B cell (primary cell): ENCODE measurements at regions of chr3 and their contacts with region 1.

Region 1: GRCh38 chr3:81490541-81491288 is 270.7 kb downstream of the GBE1 start:
- DNase-seq: peak; percentile 70
- ATAC-seq: peak; percentile 62
- H3K4me3 ChIP-seq: no peak overlapping the region
- H3K4me3 Mint-ChIP-seq: no peak overlapping the region
- H3K27ac ChIP-seq: no peak overlapping the region
- H3K27ac Mint-ChIP-seq: no peak overlapping the region
- H3K4me1 ChIP-seq: peaks cover 2% of the 10 kb centered on the region in 2 donors
- H3K4me1 Mint-ChIP-seq: peaks cover 3% of the 10 kb centered on the region
- H3K27me3 ChIP-seq: no peaks in the 10 kb centered on the region
- H3K27me3 Mint-ChIP-seq: no peaks in the 10 kb centered on the region
- CTCF ChIP-seq: peak; percentile 96

Region 2: GRCh38 chr3:80472451-80472850 is 1018.3 kb before region 1 on chr3:
- CTCF ChIA-PET with region 1: no interaction called
- POLR2A ChIA-PET with region 1: no interaction called
- intact Hi-C with region 1: no loop called
- DNase-seq: no peak
- ATAC-seq: no peak
- H3K4me3 ChIP-seq: no peak overlapping the region
- H3K4me3 Mint-ChIP-seq: no peak overlapping the region
- H3K27ac ChIP-seq: no peak overlapping the region
- H3K27ac Mint-ChIP-seq: no peak overlapping the region
- H3K4me1 ChIP-seq: no peaks in the 10 kb centered on the region
- H3K4me1 Mint-ChIP-seq: no peaks in the 10 kb centered on the region
- H3K27me3 ChIP-seq: no peaks in the 10 kb centered on the region
- H3K27me3 Mint-ChIP-seq: no peaks in the 10 kb centered on the region
- CTCF ChIP-seq: no peak

Region 3: DNA sequence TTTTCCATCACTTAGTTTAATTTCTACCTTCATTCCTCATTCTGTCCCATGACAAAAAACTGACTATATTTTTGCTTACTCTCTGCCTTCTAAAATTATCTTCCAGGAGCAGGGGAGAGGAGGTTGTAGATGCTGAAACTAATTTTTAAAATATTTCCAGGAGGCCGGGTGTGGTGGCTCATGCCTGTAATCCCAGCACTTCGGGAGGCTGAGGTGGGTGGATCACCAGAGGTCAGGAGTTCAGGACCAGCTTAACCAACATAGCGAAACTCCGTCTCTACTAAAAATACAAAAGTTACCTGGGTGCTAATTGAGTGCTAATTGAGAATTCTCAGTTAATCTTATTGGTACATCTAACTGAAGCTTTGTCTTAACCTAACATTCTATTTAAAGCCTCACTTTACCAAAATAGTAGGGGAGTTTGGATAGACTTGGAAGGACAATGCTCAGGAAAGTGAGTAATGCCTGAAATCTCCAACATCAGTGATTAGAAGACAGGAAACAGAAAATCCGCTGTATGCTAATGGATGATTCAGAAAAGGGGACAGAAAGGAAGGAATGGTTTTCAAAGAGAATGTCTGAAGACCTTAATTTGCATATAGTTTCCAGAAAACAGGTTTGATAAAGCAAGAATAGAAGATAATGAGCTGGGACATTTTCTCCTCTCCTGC is 65.4 kb before region 1 on chr3:
- CTCF ChIA-PET with region 1: no interaction called
- POLR2A ChIA-PET with region 1: no interaction called
- intact Hi-C with region 1: no loop called
- DNase-seq: no peak
- ATAC-seq: no peak
- H3K4me3 ChIP-seq: no peak overlapping the region
- H3K4me3 Mint-ChIP-seq: no peak overlapping the region
- H3K27ac ChIP-seq: no peak overlapping the region
- H3K27ac Mint-ChIP-seq: no peak overlapping the region
- H3K4me1 ChIP-seq: no peaks in the 10 kb centered on the region
- H3K4me1 Mint-ChIP-seq: no peaks in the 10 kb centered on the region
- H3K27me3 ChIP-seq: no peaks in the 10 kb centered on the region
- H3K27me3 Mint-ChIP-seq: no peaks in the 10 kb centered on the region
- CTCF ChIP-seq: no peak

Region 4: DNA sequence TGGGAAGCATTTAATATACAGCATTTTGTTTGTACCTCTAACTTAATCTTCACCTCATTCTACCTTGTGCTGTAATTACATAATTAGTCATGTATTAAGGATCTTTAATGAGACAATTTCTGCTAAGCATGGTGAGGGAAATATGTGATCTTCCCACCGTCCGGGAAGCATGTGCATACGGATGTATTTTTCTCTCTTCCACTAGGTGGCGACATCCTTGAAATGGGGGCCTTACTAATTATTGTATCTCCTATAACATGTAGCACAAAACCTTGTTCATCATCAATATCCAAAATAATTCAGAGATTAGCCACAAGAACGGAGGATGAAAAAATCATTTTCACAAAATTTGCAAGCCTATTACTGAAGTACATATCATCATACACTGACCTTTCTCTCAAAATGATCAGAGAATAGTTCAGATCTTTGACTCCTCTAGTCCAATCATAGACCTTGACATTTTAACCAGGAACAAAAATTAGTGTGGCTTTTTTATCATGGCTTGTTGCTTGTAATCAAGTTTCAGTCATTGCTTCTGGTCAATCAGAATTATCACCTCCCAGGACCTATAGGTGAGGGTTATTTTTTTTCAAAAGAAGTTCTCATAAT is 419.6 kb after region 1 on chr3:
- CTCF ChIA-PET with region 1: interaction called, 3 read pairs
- POLR2A ChIA-PET with region 1: no interaction called
- intact Hi-C with region 1: loop called (anchors 5 kb)
- DNase-seq: peak; percentile 45
- ATAC-seq: no peak
- H3K4me3 ChIP-seq: no peak overlapping the region
- H3K4me3 Mint-ChIP-seq: no peak overlapping the region
- H3K27ac ChIP-seq: no peak overlapping the region
- H3K27ac Mint-ChIP-seq: no peak overlapping the region
- H3K4me1 ChIP-seq: no peaks in the 10 kb centered on the region
- H3K4me1 Mint-ChIP-seq: no peaks in the 10 kb centered on the region
- H3K27me3 ChIP-seq: no peaks in the 10 kb centered on the region
- H3K27me3 Mint-ChIP-seq: peaks cover 5% of the 10 kb centered on the region
- CTCF ChIP-seq: peak; percentile 92